ENCODE measurements at regions of chr6 and their contacts with region 1.

Region 1: DNA sequence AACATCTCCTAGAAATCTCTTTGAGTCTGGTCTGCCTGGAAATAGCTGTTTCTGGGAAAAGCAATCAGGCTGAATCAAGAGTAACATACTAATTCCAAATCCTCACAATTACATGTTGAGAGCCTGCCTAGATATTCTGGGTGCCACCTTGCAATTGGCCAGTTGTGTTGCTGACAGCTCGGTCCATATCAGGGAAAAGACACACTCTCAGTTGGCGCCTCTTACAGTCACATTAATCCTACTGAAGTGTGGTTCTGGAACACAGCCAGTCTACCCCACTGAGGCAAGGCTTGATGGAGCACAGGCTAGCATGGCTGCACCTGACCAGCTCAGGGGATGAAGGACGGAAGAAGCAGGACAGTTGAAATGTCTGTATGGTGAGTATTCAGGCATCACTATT is 121.4 kb upstream of the TAB2 start:
- DNase-seq: no peak
- ATAC-seq: no peak
- H3K4me3 ChIP-seq: no peak overlapping the region
- H3K27ac ChIP-seq: no peak overlapping the region
- H3K4me1 ChIP-seq: no peaks in the 10 kb centered on the region
- H3K27me3 ChIP-seq: peaks cover 15% of the 10 kb centered on the region
- CTCF ChIP-seq: no peak
- POLR2A ChIP-seq: no peak
- RAD21 ChIP-seq: no peak

Region 2: DNA sequence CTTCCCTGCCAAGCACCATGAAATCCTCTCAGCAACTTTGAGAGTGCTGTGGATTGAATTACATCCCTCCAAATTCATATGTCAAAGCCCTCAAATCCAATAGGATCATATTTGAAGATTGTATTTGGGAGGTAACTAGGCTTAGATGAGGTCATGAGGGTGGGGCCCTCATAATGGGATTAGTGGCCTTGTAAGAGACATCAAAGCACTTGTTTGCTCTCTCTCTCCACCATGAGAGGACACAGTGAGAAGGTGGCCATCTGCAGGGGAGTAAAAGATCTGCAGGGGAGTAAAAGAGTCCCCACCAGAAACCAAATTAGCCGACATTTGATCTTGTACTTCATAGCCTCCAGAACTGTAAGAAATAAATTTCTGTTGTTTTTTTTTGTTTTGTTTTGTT is 1389.4 kb before region 1 on chr6:
- CTCF ChIA-PET with region 1: no interaction called
- POLR2A ChIA-PET with region 1: no interaction called
- dilution Hi-C with region 1: no loop called
- in situ Hi-C with region 1: no loop called
- intact Hi-C with region 1: no loop called
- DNase-seq: no peak
- ATAC-seq: no peak
- H3K4me3 ChIP-seq: no peak overlapping the region
- H3K27ac ChIP-seq: no peak overlapping the region
- H3K4me1 ChIP-seq: peaks cover 4% of the 10 kb centered on the region; the same call in 1 of the 2 replicates
- H3K27me3 ChIP-seq: no peaks in the 10 kb centered on the region
- CTCF ChIP-seq: no peak
- POLR2A ChIP-seq: no peak
- RAD21 ChIP-seq: no peak

Region 3: GRCh38 chr6:149452037-149452939 is 256.2 kb after region 1 on chr6:
- CTCF ChIA-PET with region 1: no interaction called
- POLR2A ChIA-PET with region 1: interaction called, 15 read pairs
- dilution Hi-C with region 1: no loop called
- in situ Hi-C with region 1: no loop called
- intact Hi-C with region 1: no loop called
- DNase-seq: no peak
- ATAC-seq: no peak
- H3K4me3 ChIP-seq: no peak overlapping the region
- H3K27ac ChIP-seq: no peak overlapping the region
- H3K4me1 ChIP-seq: peaks cover 14% of the 10 kb centered on the region
- H3K27me3 ChIP-seq: peaks cover 17% of the 10 kb centered on the region; the same call in 1 of the 2 replicates
- CTCF ChIP-seq: no peak
- POLR2A ChIP-seq: no peak
- RAD21 ChIP-seq: no peak

Measured in IMR-90 (cell line).